Sigmoid colon (tissue), 7 donors: ENCODE measurements at regions of chr11 and their contacts with region 1.

Region 1: GRCh38 chr11:6705905-6706535 is 22.9 kb upstream of the MRPL17 start:
- DNase-seq: no peak
- H3K4me3 ChIP-seq: no peak overlapping the region
- H3K27ac ChIP-seq: no peak overlapping the region
- H3K4me1 ChIP-seq: peaks cover 0 to 3% (median 0%) of the 10 kb centered on the region in 4 donors
- H3K27me3 ChIP-seq: no peaks in the 10 kb centered on the region
- CTCF ChIP-seq: peak; percentile 57 to 93 (median 77)
- EP300 ChIP-seq: no peak
- POLR2A ChIP-seq: no peak

Region 2: GRCh38 chr11:6377902-6378639 is 327.9 kb before region 1 on chr11:
- intact Hi-C with region 1: loop called (anchors 5 kb)
- DNase-seq: no peak
- H3K4me3 ChIP-seq: no peak overlapping the region
- H3K27ac ChIP-seq: no peak overlapping the region
- H3K4me1 ChIP-seq: no peaks in the 10 kb centered on the region
- H3K27me3 ChIP-seq: no peaks in the 10 kb centered on the region
- CTCF ChIP-seq: no peak
- EP300 ChIP-seq: no peak
- POLR2A ChIP-seq: no peak

Region 3: DNA sequence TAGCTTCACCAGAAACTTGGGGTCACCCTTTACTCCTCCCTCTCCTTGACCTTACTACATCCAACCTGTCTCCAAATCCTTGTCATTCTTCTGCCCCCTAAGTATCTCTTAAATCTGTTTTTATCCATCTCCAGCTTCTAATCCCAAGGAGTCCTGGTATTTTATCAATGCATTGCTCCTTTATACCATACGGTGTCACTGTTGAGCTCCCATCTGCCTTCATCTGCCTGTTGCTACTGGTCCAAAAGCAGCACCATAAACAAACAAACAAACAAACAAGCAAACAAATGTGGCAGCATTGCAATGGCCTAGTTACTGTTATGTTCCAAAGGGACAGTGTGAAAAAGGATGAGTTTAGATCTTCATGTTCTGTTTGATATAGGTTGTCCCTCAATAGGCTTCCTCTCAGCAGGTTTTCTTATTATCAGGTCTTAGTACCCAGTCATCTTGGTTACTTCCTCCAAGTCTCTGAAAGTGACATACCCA is 174.7 kb before region 1 on chr11:
- intact Hi-C with region 1: loop called (anchors 1 kb)
- DNase-seq: no peak
- H3K4me3 ChIP-seq: no peak overlapping the region
- H3K27ac ChIP-seq: no peak overlapping the region
- H3K4me1 ChIP-seq: peaks cover 0 to 11% (median 0%) of the 10 kb centered on the region in 4 donors
- H3K27me3 ChIP-seq: no peaks in the 10 kb centered on the region
- CTCF ChIP-seq: peak; percentile 78 to 90 (median 86)
- EP300 ChIP-seq: no peak
- POLR2A ChIP-seq: no peak

Region 4: GRCh38 chr11:6757373-6757967 is 51.5 kb after region 1 on chr11:
- intact Hi-C with region 1: loop called (anchors 5 kb)
- DNase-seq: no peak
- H3K4me3 ChIP-seq: no peak overlapping the region
- H3K27ac ChIP-seq: no peak overlapping the region
- H3K4me1 ChIP-seq: no peaks in the 10 kb centered on the region
- H3K27me3 ChIP-seq: no peaks in the 10 kb centered on the region
- CTCF ChIP-seq: peak in 2 of 4 experiments; percentile 30 to 32
- EP300 ChIP-seq: no peak
- POLR2A ChIP-seq: no peak

Region 5: GRCh38 chr11:6988506-6988905 is 282.5 kb after region 1 on chr11:
- intact Hi-C with region 1: no loop called
- DNase-seq: no peak
- H3K4me3 ChIP-seq: no peak overlapping the region
- H3K27ac ChIP-seq: no peak overlapping the region
- H3K4me1 ChIP-seq: peaks cover 0 to 15% (median 12%) of the 10 kb centered on the region in 4 donors
- H3K27me3 ChIP-seq: no peaks in the 10 kb centered on the region
- CTCF ChIP-seq: no peak
- EP300 ChIP-seq: no peak
- POLR2A ChIP-seq: no peak